Prostate gland (tissue), 2 donors: ENCODE measurements at regions of chr11 and their contacts with region 1.

Region 1: GRCh38 chr11:87421422-87421821 is 383.7 kb downstream of the TMEM135 start:
- DNase-seq: peak; percentile 58
- H3K4me3 ChIP-seq: no peak overlapping the region
- H3K27ac ChIP-seq: no peak overlapping the region
- H3K4me1 ChIP-seq: no peaks in the 10 kb centered on the region
- H3K27me3 ChIP-seq: no peaks in the 10 kb centered on the region
- CTCF ChIP-seq: peak; percentile 49 to 88 (median 73)
- POLR2A ChIP-seq: no peak

Region 2: GRCh38 chr11:86869966-86870570 is 551.4 kb before region 1 on chr11:
- intact Hi-C with region 1: loop called (anchors 10 kb)
- DNase-seq: peak; percentile 28
- H3K4me3 ChIP-seq: no peak overlapping the region
- H3K27ac ChIP-seq: no peak overlapping the region
- H3K4me1 ChIP-seq: no peaks in the 10 kb centered on the region
- H3K27me3 ChIP-seq: no peaks in the 10 kb centered on the region
- CTCF ChIP-seq: peak; percentile 23 to 71 (median 62)
- POLR2A ChIP-seq: no peak

Region 3: DNA sequence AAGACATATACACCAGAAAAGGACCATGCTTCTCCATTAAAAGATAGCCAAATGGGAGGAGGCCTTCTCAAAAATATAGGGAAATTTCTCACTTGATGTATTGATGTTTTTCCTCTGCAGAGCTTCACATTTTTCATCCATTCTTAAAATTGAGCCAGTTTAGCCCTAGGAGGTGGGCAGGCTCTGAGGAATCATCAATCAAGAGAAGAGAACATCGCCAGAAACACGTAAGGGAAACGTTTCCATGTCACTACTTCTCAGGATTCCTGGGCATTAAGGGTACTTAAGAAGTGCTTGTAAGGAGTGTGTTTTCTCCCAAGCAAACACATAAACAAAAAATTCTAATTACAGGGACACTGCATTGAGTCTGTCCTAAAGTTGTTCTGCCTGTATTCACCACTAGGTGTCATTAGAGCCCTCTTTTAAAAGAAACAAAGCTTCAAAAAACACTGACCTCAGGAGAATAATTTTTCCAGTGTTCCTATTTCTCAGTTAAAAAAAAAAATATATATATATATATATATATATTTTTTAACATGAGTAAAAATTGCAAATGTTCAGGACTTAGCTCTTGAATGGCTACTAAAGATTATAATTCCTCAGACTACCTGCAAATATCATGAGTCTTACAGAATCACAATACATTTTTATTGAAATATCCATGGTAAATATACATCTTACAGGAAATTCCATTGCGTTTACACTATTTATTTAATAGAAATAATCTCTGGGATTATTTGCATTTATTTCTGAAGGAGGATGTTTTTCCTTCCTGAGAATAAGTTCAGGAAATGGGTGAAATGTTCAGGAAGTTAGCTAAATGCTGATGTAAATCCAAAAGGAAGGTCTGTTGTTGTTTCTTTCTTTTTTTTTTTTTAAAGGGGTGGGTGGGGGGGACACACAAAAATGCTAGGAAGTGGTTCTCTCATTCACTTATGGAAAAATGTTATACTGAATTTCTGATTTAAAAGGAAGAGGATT is 482.2 kb before region 1 on chr11:
- intact Hi-C with region 1: loop called (anchors 10 kb)
- DNase-seq: peak; percentile 32
- H3K4me3 ChIP-seq: no peak overlapping the region
- H3K27ac ChIP-seq: peak overlapping the region; percentile 32 to 64
- H3K4me1 ChIP-seq: peaks cover 16% of the 10 kb centered on the region
- H3K27me3 ChIP-seq: no peaks in the 10 kb centered on the region
- CTCF ChIP-seq: peak; percentile 54 to 81 (median 68)
- POLR2A ChIP-seq: no peak

Region 4: DNA sequence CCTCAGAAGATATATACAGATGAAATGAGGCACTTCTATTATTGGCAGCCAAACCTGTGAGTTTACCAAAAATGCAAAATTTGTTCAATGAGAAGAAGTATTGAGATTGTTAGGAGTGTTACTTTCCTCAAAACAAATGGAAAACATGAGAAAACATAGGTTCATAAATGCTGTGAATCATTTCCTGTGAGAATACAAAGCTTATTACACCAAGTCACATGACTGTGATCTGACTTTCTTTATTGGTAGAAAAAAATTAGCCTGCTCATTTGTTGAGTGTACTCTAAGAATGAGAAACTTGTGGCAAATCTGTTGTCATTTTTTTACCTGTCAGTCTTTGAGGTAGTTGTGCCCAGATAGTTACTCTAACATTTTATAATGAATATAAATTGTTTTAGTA is 168.6 kb before region 1 on chr11:
- intact Hi-C with region 1: no loop called
- DNase-seq: no peak
- H3K4me3 ChIP-seq: no peak overlapping the region
- H3K27ac ChIP-seq: no peak overlapping the region
- H3K4me1 ChIP-seq: no peaks in the 10 kb centered on the region
- H3K27me3 ChIP-seq: no peaks in the 10 kb centered on the region
- CTCF ChIP-seq: no peak
- POLR2A ChIP-seq: no peak

Region 5: DNA sequence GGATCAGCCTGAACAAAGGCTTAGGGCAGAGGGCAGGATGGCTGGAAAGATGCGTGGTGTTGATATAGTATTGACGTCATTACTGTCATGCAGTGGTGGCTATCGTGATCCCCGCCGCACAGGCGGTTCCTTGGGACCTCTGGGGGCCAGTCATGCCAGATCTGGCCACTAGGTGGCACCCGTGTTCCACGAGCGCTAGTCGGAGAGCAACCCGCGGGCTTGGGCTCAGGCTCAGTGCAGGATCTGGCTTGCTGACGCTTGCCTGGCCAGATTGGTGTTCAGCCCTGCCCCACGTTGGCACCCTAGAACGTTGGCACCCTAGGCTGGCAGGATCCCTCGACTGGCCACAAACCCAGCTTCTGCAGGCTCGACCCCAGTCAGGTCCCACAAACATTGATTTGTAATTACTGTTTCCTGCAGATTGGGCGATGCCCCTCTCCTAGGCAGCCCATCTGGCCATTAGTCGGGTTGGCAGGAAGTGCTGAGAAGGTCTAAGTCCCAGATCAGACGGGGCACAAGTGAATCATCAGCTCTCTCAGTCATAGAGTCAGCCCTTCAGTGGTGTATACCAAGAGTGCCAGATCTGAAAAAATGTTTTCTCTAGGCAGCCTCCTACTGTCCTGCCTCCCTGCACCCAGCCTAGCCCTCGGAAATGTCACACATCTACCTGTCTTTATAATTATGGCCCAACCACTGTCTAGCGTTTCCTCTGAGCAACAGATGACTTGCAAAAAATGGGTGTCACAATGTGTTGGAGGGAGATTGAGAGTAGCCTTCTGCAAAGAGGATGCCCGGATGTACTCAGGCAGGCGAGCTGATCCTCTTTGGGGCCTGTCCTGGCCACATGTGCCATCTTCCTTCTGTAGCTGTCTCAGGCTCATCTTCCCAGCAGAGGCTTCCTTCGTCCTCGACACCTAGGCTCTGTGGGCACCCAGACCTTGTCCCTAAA is 68.4 kb before region 1 on chr11:
- intact Hi-C with region 1: loop called (anchors 2 kb)
- DNase-seq: peak; percentile 76
- H3K4me3 ChIP-seq: no peak overlapping the region
- H3K27ac ChIP-seq: no peak overlapping the region
- H3K4me1 ChIP-seq: no peaks in the 10 kb centered on the region
- H3K27me3 ChIP-seq: no peaks in the 10 kb centered on the region
- CTCF ChIP-seq: peak; percentile 96 to 97 (median 96)
- POLR2A ChIP-seq: no peak

Region 6: GRCh38 chr11:87405843-87406242 is 15.6 kb before region 1 on chr11:
- intact Hi-C with region 1: no loop called
- DNase-seq: no peak
- H3K4me3 ChIP-seq: no peak overlapping the region
- H3K27ac ChIP-seq: no peak overlapping the region
- H3K4me1 ChIP-seq: no peaks in the 10 kb centered on the region
- H3K27me3 ChIP-seq: no peaks in the 10 kb centered on the region
- CTCF ChIP-seq: no peak
- POLR2A ChIP-seq: no peak

Region 7: GRCh38 chr11:87712802-87713202 is 291.4 kb after region 1 on chr11:
- intact Hi-C with region 1: no loop called
- DNase-seq: no peak
- H3K4me3 ChIP-seq: no peak overlapping the region
- H3K27ac ChIP-seq: no peak overlapping the region
- H3K4me1 ChIP-seq: no peaks in the 10 kb centered on the region
- H3K27me3 ChIP-seq: no peaks in the 10 kb centered on the region
- CTCF ChIP-seq: no peak
- POLR2A ChIP-seq: no peak